Activated CD4-positive, alpha-beta T cell treated with anti-CD3 and anti-CD28 coated beads, Interleukin-2, amount 10 ng/mL, durations not matched to agents 24 days and 14 days (primary cell): ENCODE measurements at regions of chr9 and their contacts with region 1.

Region 1: GRCh38 chr9:33446946-33447798 is at the start of gene AQP3:
- DNase-seq: peak; percentile 94
- H3K4me3 Mint-ChIP-seq: peak within 1 kb of the TSS; percentile 86
- H3K27ac Mint-ChIP-seq: peak within 1 kb of the TSS; percentile 91
- H3K4me1 Mint-ChIP-seq: peaks cover 50% of the 10 kb centered on the region
- H3K27me3 Mint-ChIP-seq: no peaks in the 10 kb centered on the region
- total RNA-seq, gene AQP3: 3.2 and 4.1 TPM in 2 replicates

Region 2: DNA sequence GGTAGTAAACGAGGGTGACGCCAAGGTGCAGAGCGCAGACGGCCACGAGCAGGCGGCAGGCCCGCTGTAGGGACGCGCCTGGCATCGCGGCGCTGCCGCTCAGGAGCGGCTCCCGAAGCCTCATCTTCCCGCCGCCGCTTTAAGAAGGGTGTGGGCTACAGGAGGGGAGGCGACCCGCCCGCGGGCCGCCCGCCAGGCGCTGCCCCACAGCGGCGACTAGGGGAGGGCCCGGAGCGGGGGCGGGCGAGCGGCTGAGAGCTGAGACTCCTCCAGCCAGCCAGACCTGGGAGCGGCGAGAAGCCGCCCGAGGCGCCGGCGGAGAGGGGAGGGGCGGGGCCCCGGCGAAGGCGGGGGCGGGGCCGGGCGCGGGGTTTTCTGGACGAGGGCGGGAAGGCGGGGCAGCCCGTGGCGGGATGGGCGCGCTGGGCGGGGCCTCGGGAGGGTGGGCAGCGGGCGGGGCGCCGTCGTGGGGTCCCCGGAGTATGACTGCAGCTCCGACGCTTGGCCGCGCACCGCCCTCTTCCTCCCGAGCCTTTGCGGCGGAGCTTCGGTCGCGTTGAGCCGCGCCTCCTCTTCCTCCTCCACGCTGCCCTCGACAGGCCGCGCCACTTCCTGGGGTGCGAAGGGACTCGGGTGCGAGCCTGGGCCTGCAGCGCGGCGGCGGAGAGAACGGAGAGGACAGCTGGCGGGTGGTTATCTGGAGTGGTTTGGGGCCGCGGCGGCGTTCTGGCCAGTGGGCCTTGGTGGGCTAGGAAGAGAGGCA is 279.9 kb before region 1 on chr9 and contains the start of gene B4GALT1:
- intact Hi-C with region 1: loop called (anchors 5 kb)
- DNase-seq: peak; percentile 97
- H3K4me3 Mint-ChIP-seq: peak within 1 kb of the TSS; percentile 95
- H3K27ac Mint-ChIP-seq: peak within 1 kb of the TSS; percentile 98
- H3K4me1 Mint-ChIP-seq: peaks cover 65% of the 10 kb centered on the region
- H3K27me3 Mint-ChIP-seq: no peaks in the 10 kb centered on the region
- total RNA-seq, gene B4GALT1: 53.8 and 55.7 TPM in 2 replicates

Region 3: GRCh38 chr9:33320568-33321261 is 126.5 kb before region 1 on chr9:
- intact Hi-C with region 1: no loop called
- DNase-seq: no peak
- H3K4me3 Mint-ChIP-seq: no peak overlapping the region
- H3K27ac Mint-ChIP-seq: peak overlapping the region; percentile 76
- H3K4me1 Mint-ChIP-seq: peaks cover 12% of the 10 kb centered on the region
- H3K27me3 Mint-ChIP-seq: no peaks in the 10 kb centered on the region

Region 4: GRCh38 chr9:33374634-33375213 is 72.4 kb before region 1 on chr9:
- intact Hi-C with region 1: loop called (anchors 2 kb)
- DNase-seq: peak; percentile 91
- H3K4me3 Mint-ChIP-seq: peak overlapping the region; percentile 30
- H3K27ac Mint-ChIP-seq: peak overlapping the region; percentile 52
- H3K4me1 Mint-ChIP-seq: peaks cover 10% of the 10 kb centered on the region
- H3K27me3 Mint-ChIP-seq: no peaks in the 10 kb centered on the region

Region 5: GRCh38 chr9:33415501-33416038 is 31.6 kb before region 1 on chr9:
- intact Hi-C with region 1: loop called (anchors 1 kb)
- DNase-seq: peak; percentile 98
- H3K4me3 Mint-ChIP-seq: peak overlapping the region; percentile 69
- H3K27ac Mint-ChIP-seq: peak overlapping the region; percentile 94
- H3K4me1 Mint-ChIP-seq: peaks cover 50% of the 10 kb centered on the region
- H3K27me3 Mint-ChIP-seq: peaks cover 2% of the 10 kb centered on the region

Region 6: DNA sequence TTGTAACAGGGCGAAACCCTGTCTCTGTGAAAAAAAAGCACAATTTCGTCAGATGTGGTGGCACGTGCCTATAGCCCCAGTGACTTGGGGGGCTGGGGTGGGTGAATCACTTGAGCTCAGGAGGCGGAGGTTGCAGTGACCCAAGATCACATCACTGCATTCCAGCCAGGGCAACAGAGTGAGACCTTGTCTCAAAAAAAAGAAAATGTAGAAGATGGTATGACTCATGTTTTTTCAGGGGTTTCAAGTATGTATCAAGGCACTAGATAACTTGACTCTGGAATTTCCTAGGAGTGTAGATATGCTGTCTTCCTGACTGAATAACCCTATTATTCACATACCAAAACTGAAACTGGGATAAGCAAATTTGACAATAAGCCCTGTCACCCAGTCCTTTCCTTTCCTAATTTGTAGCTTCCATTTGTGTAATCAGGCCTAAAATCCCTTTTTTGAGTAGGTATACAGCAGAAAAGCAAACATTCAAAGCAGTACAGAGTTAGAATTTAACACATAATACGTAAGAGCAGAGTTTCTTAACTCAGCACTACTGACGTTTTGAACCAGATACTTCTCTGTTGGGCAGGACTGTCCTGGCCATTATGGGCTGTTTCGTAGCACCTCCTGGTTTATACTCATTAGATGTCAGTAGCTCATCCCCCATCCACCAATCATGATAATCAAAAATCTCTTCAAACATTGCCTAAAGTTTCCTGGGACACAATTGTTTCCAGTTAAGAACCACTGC is 59.6 kb after region 1 on chr9:
- intact Hi-C with region 1: no loop called
- DNase-seq: no peak
- H3K4me3 Mint-ChIP-seq: no peak overlapping the region
- H3K27ac Mint-ChIP-seq: no peak overlapping the region
- H3K4me1 Mint-ChIP-seq: peaks cover 12% of the 10 kb centered on the region
- H3K27me3 Mint-ChIP-seq: peaks cover 3% of the 10 kb centered on the region

Region 7: DNA sequence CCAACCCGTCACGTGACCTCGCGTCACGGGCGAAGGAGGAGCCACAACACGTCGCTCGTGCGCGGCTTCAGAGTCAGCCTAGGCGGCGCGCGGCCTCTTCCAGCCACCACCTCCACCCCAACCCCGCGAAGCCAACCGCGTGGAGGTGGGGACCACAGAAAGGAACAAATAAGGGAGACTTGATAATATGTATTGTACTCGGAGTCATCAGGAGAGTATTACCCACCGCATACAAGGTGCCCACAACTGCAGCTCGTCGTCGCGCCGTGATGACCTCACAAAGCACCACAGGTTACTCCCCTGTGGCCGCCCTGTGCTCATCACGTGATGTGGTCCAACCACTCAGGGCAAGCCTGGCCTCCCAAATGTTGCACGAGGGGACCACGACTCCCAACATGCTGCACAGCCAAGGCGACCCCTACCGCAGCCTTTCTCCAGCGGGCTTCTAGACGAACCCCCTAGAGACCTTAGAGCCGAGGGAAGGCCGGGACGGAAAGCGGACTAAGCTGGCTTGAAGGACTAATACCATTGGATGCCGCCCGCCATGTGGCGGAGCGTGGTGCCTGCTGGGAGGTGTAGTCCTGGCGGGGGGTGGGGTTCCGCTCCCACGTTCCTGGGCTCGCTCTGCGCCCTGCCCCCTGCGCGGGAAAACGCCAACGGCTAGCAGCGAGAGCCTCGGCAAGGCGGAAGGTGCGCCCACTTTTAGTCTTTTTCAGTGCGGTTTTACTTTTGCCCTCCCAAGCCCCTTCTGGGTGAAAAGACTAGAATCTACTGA is 601.9 kb after region 1 on chr9:
- intact Hi-C with region 1: loop called (anchors 2 kb)
- DNase-seq: peak; percentile 99
- H3K4me3 Mint-ChIP-seq: peak overlapping the region; percentile 96
- H3K27ac Mint-ChIP-seq: peak overlapping the region; percentile 99
- H3K4me1 Mint-ChIP-seq: peaks cover 41% of the 10 kb centered on the region
- H3K27me3 Mint-ChIP-seq: peaks cover 3% of the 10 kb centered on the region